Natural killer cell (primary cell): ENCODE measurements at regions of chr9 and their contacts with region 1.

Region 1: DNA sequence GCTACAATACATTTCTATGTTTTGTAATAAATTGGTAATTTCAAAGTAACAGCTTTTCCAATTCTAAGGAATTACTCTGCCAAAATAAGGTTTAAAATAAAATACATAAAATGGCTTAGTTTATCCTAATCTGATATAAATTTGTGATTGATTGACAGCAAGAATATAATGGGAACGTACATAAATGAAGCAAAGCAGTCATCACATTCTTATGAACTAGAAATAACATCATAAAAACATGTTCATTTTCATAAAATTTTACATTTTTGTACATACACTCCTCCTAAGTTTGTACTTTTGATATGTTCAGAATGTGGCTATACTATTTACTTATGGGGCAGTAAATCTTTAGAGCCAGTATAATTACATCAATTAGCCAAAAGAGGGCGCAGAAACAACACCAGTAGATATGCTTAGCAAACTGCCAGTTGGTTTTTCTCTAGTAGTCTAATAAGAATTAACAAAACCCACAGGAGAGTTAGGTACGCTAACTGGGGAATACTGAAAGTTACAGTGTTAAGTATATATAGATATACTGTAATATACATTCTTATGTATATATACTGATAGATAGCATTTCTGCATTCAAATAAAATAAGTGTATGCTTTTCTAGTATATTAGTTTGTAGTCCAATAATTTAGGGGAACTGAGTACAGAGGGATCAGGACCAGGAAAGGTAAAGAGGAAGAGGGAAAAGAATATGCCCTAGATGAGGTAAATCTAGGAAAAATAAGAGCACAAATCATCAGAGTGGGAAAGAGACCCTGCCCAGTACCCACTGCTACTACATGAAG is 76.8 kb downstream of the ZDHHC21 start:
- DNase-seq: peak in 1 of 2 donors; percentile 58
- ATAC-seq: peak in 1 of 3 donors; percentile 62
- H3K4me3 ChIP-seq: no peak overlapping the region
- H3K4me3 Mint-ChIP-seq: no peak overlapping the region
- H3K27ac ChIP-seq: no peak overlapping the region
- H3K27ac Mint-ChIP-seq: no peak overlapping the region
- H3K4me1 ChIP-seq: no peaks in the 10 kb centered on the region
- H3K4me1 Mint-ChIP-seq: no peaks in the 10 kb centered on the region
- H3K27me3 ChIP-seq: no peaks in the 10 kb centered on the region
- H3K27me3 Mint-ChIP-seq: no peaks in the 10 kb centered on the region
- CTCF ChIP-seq: peak; percentile 63

Region 2: DNA sequence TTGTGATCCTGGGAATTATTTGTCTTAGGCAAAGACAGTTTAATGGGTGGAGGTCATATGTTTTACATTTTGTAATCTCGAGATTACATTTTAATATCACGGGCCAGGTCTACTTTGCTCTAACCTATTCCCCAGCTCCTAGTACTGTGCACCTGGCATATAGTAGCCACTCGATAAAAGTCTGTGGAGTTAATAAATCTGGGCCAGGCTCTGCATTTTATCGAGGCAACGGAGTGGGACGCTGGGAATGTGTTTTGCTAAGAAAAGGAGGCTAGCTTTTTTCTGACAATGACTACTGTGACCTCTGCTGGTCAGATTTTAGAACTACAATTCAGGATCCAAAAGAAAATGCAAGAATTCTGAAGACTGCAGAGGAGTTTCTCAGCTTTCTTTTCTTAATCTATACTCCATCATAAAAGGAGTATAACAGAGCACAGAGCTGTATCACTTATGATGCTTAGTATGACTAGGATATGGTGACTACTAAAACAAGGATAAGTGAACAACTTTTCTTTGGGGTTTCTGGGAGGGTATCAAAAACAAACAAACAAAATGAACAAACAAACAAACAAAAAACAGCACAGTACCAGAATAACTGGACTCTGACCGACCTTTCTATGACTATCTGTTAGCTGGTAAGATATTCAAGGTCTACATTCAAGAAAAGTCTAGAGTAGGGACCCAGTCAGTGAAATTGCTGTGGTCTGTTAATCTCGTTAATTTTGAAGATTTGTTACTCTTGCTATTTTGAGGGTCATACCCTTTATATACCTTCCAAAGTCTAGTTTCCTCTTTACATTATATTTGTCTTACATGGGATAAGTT is 152.2 kb after region 1 on chr9:
- intact Hi-C with region 1: loop called (anchors 1 kb)
- DNase-seq: peak in 1 of 2 donors; percentile 56
- ATAC-seq: peak in 1 of 3 donors; percentile 30
- H3K4me3 ChIP-seq: no peak overlapping the region
- H3K4me3 Mint-ChIP-seq: no peak overlapping the region
- H3K27ac ChIP-seq: no peak overlapping the region
- H3K27ac Mint-ChIP-seq: no peak overlapping the region
- H3K4me1 ChIP-seq: no peaks in the 10 kb centered on the region
- H3K4me1 Mint-ChIP-seq: peaks cover 4% of the 10 kb centered on the region in 2 donors
- H3K27me3 ChIP-seq: no peaks in the 10 kb centered on the region
- H3K27me3 Mint-ChIP-seq: peaks cover 4 to 25% of the 10 kb centered on the region in 2 donors
- CTCF ChIP-seq: peak; percentile 75

Region 3: GRCh38 chr9:15135164-15135792 is 518.9 kb after region 1 on chr9:
- intact Hi-C with region 1: loop called (anchors 10 kb)
- DNase-seq: peak in 1 of 2 donors; percentile 70
- ATAC-seq: peak; percentile 64 to 92 (median 73)
- H3K4me3 ChIP-seq: no peak overlapping the region
- H3K4me3 Mint-ChIP-seq: no peak overlapping the region
- H3K27ac ChIP-seq: no peak overlapping the region
- H3K27ac Mint-ChIP-seq: no peak overlapping the region
- H3K4me1 ChIP-seq: no peaks in the 10 kb centered on the region
- H3K4me1 Mint-ChIP-seq: peaks cover 6 to 7% of the 10 kb centered on the region in 2 donors
- H3K27me3 ChIP-seq: no peaks in the 10 kb centered on the region
- H3K27me3 Mint-ChIP-seq: peaks cover 6 to 29% of the 10 kb centered on the region in 2 donors
- CTCF ChIP-seq: peak; percentile 70